ENCODE measurements at regions of chr3 and their contacts with region 1.

Region 1: DNA sequence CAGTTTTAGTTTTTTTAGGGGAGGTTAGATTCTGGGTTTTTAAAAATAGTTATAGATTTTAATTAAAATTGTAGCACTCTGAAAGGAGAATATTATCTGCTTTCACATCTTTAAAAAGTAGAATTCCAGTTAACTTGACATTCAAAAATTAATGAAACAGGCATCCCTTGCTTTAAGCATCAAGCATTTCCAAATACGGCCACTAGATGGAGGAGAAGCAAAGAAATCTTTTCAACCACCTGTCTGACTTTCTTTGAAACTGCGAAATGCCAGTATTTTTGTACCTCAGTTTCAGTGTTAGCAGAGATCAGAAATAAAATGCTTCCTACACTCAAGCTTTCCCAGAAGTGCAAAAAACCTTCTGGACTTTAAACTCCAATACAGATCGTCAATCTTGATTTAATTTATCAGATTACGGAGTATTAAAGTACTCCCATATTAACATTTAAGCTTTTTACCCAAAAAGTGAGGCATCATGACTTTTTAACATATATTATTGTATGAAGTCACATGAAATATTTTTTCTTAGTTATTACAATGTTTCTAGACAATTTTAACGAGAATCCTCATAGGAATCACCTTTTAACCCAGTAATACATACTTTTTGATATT is 153.3 kb downstream of the P3H2 start:
- DNase-seq: peak in 6 of 9 donors; percentile 13 to 47 (median 33)
- ATAC-seq: no peak
- H3K4me3 ChIP-seq: no peak overlapping the region
- H3K4me3 Mint-ChIP-seq: no peak overlapping the region
- H3K27ac ChIP-seq: no peak overlapping the region
- H3K27ac Mint-ChIP-seq: no peak overlapping the region
- H3K4me1 ChIP-seq: no peaks in the 10 kb centered on the region
- H3K4me1 Mint-ChIP-seq: peaks cover 0 to 4% (median 0%) of the 10 kb centered on the region in 7 donors
- H3K27me3 ChIP-seq: no peaks in the 10 kb centered on the region
- H3K27me3 Mint-ChIP-seq: peaks cover 0 to 9% (median 5%) of the 10 kb centered on the region in 5 donors

Region 2: DNA sequence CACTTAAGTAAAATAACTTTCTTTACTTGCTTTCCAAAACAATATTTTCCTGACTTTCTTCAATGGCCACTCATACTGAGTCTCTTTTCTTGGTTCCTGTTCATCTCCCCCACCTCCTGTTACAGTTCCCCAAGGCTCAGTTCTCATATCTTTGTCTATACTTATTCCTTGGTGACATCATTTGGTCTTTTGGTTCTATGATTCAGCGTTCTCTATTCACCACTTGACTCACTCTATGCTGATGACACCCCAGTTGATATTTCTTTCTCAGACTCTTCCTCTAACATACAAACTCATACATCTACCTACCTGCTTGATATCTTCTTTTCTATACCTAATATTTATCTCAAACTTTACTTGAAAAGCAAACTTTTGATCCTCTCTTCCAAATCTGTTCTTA is 238.4 kb after region 1 on chr3:
- CTCF ChIA-PET with region 1: no interaction called
- POLR2A ChIA-PET with region 1: no interaction called
- intact Hi-C with region 1: loop called (anchors 1 kb)
- DNase-seq: no peak
- ATAC-seq: peak; percentile 59
- H3K4me3 ChIP-seq: no peak overlapping the region
- H3K4me3 Mint-ChIP-seq: no peak overlapping the region
- H3K27ac ChIP-seq: no peak overlapping the region
- H3K27ac Mint-ChIP-seq: no peak overlapping the region
- H3K4me1 ChIP-seq: no peaks in the 10 kb centered on the region
- H3K4me1 Mint-ChIP-seq: peaks cover 0 to 4% (median 0%) of the 10 kb centered on the region in 7 donors
- H3K27me3 ChIP-seq: no peaks in the 10 kb centered on the region
- H3K27me3 Mint-ChIP-seq: peaks cover 4 to 40% (median 9%) of the 10 kb centered on the region in 5 donors

Region 3: DNA sequence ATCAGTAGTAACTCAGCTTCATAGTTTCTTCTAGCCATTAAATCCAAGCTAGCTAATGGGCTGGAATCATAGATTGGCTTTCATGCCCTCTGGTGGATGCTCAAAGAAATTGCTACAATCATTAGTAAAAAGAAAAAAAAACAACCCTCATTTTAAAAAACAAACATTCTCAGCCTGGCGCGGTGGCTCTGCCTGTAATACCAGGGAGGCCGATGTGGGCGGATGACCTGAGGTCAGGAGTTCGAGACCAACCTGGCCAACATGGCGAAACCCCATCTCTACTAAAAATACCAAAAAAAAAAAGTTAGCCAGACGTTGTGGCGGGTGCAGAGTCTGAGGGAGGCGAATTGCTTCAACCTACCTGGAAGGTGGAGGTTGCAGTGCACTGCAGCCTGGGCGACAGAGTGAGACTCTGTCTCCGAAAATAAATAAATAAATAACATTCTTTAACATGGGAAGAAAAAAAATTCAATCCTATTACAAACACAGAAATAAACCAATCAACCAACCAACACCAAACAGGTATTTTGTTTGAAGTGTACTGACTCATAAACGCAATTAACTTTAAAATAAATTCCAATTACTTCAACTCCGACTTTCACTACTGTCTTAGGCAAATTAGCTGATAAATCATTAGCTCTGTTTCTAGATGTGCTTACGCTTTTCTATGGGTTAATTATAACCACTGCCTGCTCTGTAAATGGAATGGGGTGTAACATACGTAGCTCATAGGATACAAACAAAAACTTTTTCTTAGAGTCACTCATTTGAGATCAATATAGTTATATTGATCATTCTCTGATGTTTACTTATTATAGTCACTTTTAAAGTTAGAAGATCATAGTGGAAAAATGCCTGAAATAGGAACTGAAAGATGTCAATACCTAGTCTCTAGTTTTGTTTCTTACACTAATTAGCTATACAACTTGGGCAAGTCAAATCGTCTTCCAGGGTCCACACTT is 457.4 kb after region 1 on chr3:
- CTCF ChIA-PET with region 1: interaction called, 4 read pairs
- POLR2A ChIA-PET with region 1: no interaction called
- intact Hi-C with region 1: loop called (anchors 1 to 5 kb)
- DNase-seq: peak in 7 of 9 donors; percentile 2 to 47 (median 23)
- ATAC-seq: peak; percentile 56
- H3K4me3 ChIP-seq: no peak overlapping the region
- H3K4me3 Mint-ChIP-seq: peak overlapping the region in 8 of 10 donors; percentile 15 to 72 (median 31)
- H3K27ac ChIP-seq: no peak overlapping the region
- H3K27ac Mint-ChIP-seq: peak overlapping the region in 5 of 9 donors; percentile 3 to 59 (median 28)
- H3K4me1 ChIP-seq: no peaks in the 10 kb centered on the region
- H3K4me1 Mint-ChIP-seq: peaks cover 0 to 8% (median 3%) of the 10 kb centered on the region in 7 donors
- H3K27me3 ChIP-seq: no peaks in the 10 kb centered on the region
- H3K27me3 Mint-ChIP-seq: peaks cover 0 to 7% (median 0%) of the 10 kb centered on the region in 5 donors